A549 (cell line): ENCODE measurements at regions of chr2 and their contacts with region 1.

Region 1: DNA sequence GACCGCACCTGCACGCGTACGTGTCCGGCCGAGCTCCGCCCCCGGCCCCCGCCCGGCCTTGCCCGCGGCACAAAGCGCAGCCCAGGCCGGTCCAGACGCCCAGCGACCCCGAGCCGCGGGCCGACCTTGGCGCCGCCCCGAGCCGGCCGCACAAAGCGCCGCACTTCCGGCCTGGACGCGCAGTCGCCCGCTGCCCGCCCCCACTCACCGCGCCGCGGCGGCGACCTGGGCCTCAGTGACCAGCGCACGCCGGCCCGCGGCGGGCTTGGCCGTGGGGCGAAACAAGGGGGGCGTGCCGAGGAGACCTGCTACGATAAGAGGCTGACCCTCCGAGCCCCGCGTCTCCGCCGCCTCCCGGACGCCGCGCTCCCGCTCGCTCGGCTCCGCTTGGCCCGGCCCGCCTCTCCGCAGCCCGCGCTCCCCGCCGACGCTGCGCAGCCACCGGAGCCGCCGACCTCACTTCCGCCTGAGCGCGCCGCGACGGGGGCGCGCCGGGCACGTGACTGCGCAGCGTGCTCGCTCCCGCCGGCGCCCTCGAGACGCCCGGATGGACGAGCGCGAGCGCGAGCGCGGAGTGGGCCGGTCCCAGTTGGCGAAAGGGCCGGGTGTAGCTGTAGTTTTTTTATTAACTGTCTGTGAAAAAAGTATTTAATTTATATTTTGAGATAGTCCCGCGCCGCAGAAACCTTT is at the start of gene FAM168B:
- DNase-seq: peak; percentile 76 to 91
- ATAC-seq: peak; percentile 92 to 96
- H3K4me3 ChIP-seq: peak within 1 kb of the TSS; percentile 88
- H3K27ac ChIP-seq: peak within 1 kb of the TSS; percentile 96 to 99
- H3K4me1 ChIP-seq: peaks cover 16% of the 10 kb centered on the region; the same call in 2 of the 3 replicates
- CTCF ChIP-seq: no peak
- EP300 ChIP-seq: no peak
- POLR2A ChIP-seq: peak; percentile 69
- RAD21 ChIP-seq: no peak; a peak in 1 of 5 replicates
- polyA plus RNA-seq, gene FAM168B: 86.8 and 106 TPM in 2 replicates

Region 2: GRCh38 chr2:130744287-130745117 is 348.6 kb before region 1 on chr2:
- CTCF ChIA-PET with region 1: no interaction called
- POLR2A ChIA-PET with region 1: no interaction called
- DNase-seq: no peak
- ATAC-seq: no peak; a peak in 1 of 6 replicates
- H3K4me3 ChIP-seq: no peak overlapping the region
- H3K27ac ChIP-seq: no peak overlapping the region
- H3K4me1 ChIP-seq: no peaks in the 10 kb centered on the region
- CTCF ChIP-seq: no peak
- EP300 ChIP-seq: no peak
- POLR2A ChIP-seq: no peak
- RAD21 ChIP-seq: no peak

Region 3: DNA sequence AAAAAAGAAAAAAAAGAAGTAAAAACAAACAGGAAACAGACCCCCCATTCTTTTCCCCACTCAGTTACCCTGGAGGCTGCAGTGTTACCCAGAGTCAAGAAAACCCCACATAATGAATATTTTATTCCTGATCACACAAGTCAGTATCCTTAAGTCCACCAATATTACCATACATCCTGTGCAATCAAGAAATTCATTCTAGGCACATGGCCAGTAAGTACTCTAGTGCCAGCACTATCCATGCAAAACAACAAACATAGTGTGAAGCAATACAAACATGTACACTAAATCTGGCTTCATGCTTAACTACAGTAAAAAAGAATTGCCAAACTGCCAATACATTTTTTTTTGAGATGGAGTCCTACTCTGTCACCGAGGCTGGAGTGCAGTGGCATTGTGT is 111.5 kb before region 1 on chr2:
- CTCF ChIA-PET with region 1: no interaction called
- POLR2A ChIA-PET with region 1: no interaction called
- DNase-seq: no peak
- ATAC-seq: no peak
- H3K4me3 ChIP-seq: no peak overlapping the region
- H3K27ac ChIP-seq: no peak overlapping the region
- H3K4me1 ChIP-seq: no peaks in the 10 kb centered on the region
- CTCF ChIP-seq: no peak
- EP300 ChIP-seq: no peak
- POLR2A ChIP-seq: no peak
- RAD21 ChIP-seq: no peak

Region 4: GRCh38 chr2:131105156-131105949 is 12.2 kb after region 1 on chr2 and contains the start of gene PLEKHB2:
- CTCF ChIA-PET with region 1: interaction called, 5 read pairs
- POLR2A ChIA-PET with region 1: interaction called, 43 read pairs
- DNase-seq: peak; percentile 80 to 93
- ATAC-seq: peak; percentile 83 to 89
- H3K4me3 ChIP-seq: peak within 1 kb of the TSS; percentile 95
- H3K27ac ChIP-seq: peak within 1 kb of the TSS; percentile 89 to 98
- H3K4me1 ChIP-seq: peaks cover 19% of the 10 kb centered on the region
- CTCF ChIP-seq: peak; percentile 36; the same call in 1 of the 3 replicates
- EP300 ChIP-seq: no peak
- POLR2A ChIP-seq: peak; percentile 99
- RAD21 ChIP-seq: no peak; a peak in 1 of 5 replicates
- polyA plus RNA-seq, gene PLEKHB2: 70.6 and 76.6 TPM in 2 replicates